ENCODE measurements at regions of chr12 and their contacts with region 1.

Region 1: GRCh38 chr12:12628013-12628412 is 16.3 kb downstream of the CREBL2 start:
- DNase-seq: peak; percentile 27
- ATAC-seq: no peak
- H3K4me3 Mint-ChIP-seq: no peak overlapping the region
- H3K27ac Mint-ChIP-seq: no peak overlapping the region
- H3K4me1 Mint-ChIP-seq: peaks cover 75% of the 10 kb centered on the region
- H3K27me3 Mint-ChIP-seq: no peaks in the 10 kb centered on the region
- CTCF ChIP-seq: no peak

Region 2: DNA sequence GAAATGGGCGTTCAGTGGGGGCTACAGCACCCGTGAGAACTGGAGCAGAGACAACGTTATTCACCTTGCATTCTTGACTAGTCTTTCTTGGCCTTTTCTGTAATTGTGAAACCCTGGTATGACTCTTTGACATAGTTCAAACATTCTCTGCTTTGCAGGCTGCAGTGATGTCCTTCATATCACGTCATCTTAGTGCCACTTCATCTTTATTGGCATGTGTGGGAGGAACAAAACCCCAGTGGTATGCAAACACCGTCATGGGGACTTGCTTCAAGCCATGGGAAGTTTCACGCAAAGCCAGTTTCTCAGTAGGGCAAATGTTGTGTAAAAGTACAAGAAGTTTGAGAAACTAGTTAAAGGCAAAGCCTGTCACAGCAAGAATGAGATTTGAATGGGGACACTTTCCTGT is 45.1 kb before region 1 on chr12:
- CTCF ChIA-PET with region 1: no interaction called
- POLR2A ChIA-PET with region 1: no interaction called
- intact Hi-C with region 1: no loop called
- DNase-seq: peak; percentile 76
- ATAC-seq: peak; percentile 94
- H3K4me3 Mint-ChIP-seq: no peak overlapping the region
- H3K27ac Mint-ChIP-seq: peak overlapping the region; percentile 82
- H3K4me1 Mint-ChIP-seq: peaks cover 36% of the 10 kb centered on the region
- H3K27me3 Mint-ChIP-seq: peaks cover 1% of the 10 kb centered on the region
- CTCF ChIP-seq: no peak

Region 3: DNA sequence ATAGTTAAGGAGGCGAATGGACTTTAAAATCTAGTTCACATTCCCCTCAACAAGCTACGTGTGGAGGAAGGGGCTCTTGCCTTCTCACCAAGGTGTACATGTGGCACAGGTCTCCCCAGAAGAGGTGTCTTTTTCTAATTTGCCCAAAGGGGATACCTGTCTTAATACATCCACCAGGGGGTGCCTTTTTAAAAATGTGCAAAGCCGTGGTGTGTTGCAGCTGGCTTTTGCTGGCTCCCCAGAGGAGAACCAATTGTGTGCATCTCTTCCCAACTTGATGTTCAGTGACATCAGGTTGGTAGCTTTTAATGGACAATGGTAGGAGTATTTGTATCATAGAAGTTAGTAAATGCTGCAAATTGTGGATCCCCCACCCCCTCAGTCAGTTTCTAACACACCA is 17.5 kb after region 1 on chr12:
- CTCF ChIA-PET with region 1: interaction called, 13 read pairs
- POLR2A ChIA-PET with region 1: interaction called, 3 read pairs
- intact Hi-C with region 1: no loop called
- DNase-seq: peak; percentile 45
- ATAC-seq: peak; percentile 82
- H3K4me3 Mint-ChIP-seq: no peak overlapping the region
- H3K27ac Mint-ChIP-seq: peak overlapping the region; percentile 69
- H3K4me1 Mint-ChIP-seq: peaks cover 17% of the 10 kb centered on the region
- H3K27me3 Mint-ChIP-seq: no peaks in the 10 kb centered on the region
- CTCF ChIP-seq: peak; percentile 80

Region 4: GRCh38 chr12:12654691-12655460 is 26.9 kb after region 1 on chr12:
- CTCF ChIA-PET with region 1: interaction called, 11 read pairs
- POLR2A ChIA-PET with region 1: no interaction called
- intact Hi-C with region 1: no loop called
- DNase-seq: no peak
- ATAC-seq: no peak
- H3K4me3 Mint-ChIP-seq: no peak overlapping the region
- H3K27ac Mint-ChIP-seq: no peak overlapping the region
- H3K4me1 Mint-ChIP-seq: peaks cover 7% of the 10 kb centered on the region
- H3K27me3 Mint-ChIP-seq: no peaks in the 10 kb centered on the region
- CTCF ChIP-seq: no peak

Region 5: DNA sequence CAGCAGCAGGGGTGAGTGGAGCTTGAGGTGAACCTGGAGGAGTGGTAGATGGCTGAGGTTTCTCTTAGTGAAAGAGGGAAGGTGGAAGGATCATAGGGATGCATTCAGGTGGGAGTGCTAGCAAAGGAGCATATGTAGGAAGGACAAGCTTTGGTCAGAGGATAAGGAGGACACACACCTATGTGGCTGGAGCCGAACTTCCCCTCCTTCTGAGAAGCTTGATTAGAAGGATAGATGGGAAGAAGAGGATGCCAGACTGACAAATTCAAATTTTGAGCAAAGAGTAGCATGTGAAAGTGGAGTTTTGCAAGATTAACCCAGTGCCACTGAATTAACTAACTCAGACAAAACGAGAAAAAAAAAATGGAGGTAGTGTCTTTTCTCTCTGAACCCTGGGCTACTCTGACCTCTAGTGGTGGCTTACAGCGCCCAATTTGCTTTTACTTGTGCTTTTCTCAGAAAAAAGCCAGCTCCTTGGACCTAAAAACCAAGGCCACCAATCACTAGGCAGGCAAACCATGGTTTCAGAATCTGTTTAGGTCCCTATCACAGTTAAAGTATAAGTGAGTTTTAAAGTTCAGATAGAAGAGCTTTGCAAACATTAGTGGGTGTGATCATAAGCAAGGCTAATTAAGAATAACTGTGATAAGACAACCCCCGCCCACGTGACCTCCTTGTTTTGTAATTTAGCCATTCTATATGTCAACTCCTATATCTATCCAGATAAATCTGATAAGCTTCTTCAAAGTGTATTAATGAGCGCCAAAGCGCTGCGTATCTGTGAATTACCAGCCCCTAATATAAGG is 584.0 kb after region 1 on chr12:
- CTCF ChIA-PET with region 1: no interaction called
- POLR2A ChIA-PET with region 1: no interaction called
- intact Hi-C with region 1: no loop called
- DNase-seq: peak; percentile 84
- ATAC-seq: peak; percentile 68
- H3K4me3 Mint-ChIP-seq: no peak overlapping the region
- H3K27ac Mint-ChIP-seq: peak overlapping the region; percentile 9
- H3K4me1 Mint-ChIP-seq: peaks cover 19% of the 10 kb centered on the region
- H3K27me3 Mint-ChIP-seq: peaks cover 3% of the 10 kb centered on the region
- CTCF ChIP-seq: peak; percentile 93